PC-3 (cell line): ENCODE measurements at regions of chr6 and their contacts with region 1.

Region 1: GRCh38 chr6:159174263-159174969 is 5.2 kb downstream of the FNDC1 start:
- DNase-seq: peak; percentile 68
- ATAC-seq: peak; percentile 92
- H3K4me3 ChIP-seq: no peak overlapping the region
- H3K27ac ChIP-seq: no peak overlapping the region
- H3K4me1 ChIP-seq: no peaks in the 10 kb centered on the region
- H3K27me3 ChIP-seq: peaks cover 83% of the 10 kb centered on the region
- CTCF ChIP-seq: peak; percentile 90

Region 2: DNA sequence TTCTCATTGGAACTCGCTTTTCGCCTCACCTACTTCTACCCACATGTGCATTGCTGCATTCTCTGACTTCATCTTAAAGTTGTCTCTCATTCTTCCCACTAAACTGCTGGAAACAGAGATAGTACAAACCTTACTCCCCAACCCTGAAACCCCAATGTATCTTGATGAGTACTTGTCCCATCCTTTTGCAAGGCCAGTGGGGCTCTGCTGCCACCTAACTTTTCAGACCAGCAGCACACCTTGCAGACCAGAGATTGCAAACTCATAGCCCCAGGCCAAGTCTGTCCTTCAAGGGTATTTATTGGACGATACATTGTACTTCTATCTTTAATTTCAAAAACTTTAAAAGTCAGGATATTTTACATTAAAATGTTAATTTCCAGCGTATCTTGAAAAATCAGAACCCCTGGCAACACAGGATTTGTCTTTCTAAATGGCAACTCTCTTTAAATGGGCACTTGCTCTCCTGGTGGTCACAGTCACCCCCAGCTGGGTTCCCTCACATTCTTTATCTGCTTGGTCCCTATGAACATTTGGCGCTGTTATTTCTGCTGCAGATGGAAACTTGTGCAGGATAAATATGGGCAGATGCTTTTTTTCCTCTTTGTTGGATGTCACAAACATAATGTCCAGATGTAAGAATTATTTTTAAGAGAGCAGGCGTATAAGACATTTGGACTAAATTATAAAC is 434.7 kb after region 1 on chr6:
- CTCF ChIA-PET with region 1: no interaction called
- POLR2A ChIA-PET with region 1: no interaction called
- intact Hi-C with region 1: loop called (anchors 1 kb)
- DNase-seq: peak; percentile 56
- ATAC-seq: peak; percentile 61
- H3K4me3 ChIP-seq: no peak overlapping the region
- H3K27ac ChIP-seq: no peak overlapping the region
- H3K4me1 ChIP-seq: no peaks in the 10 kb centered on the region
- H3K27me3 ChIP-seq: no peaks in the 10 kb centered on the region
- CTCF ChIP-seq: peak; percentile 83

Region 3: GRCh38 chr6:159654483-159655098 is 480.2 kb after region 1 on chr6:
- CTCF ChIA-PET with region 1: interaction called, 6 read pairs
- POLR2A ChIA-PET with region 1: no interaction called
- intact Hi-C with region 1: loop called (anchors 2 kb)
- DNase-seq: peak; percentile 76
- ATAC-seq: peak; percentile 24; the same call in 1 of the 2 replicates
- H3K4me3 ChIP-seq: no peak overlapping the region
- H3K27ac ChIP-seq: no peak overlapping the region
- H3K4me1 ChIP-seq: no peaks in the 10 kb centered on the region
- H3K27me3 ChIP-seq: no peaks in the 10 kb centered on the region
- CTCF ChIP-seq: peak; percentile 64; the same call in 1 of the 2 replicates